A673 (cell line): ENCODE measurements at regions of chr15 and their contacts with region 1.

Region 1: GRCh38 chr15:51227940-51228783 is 110.2 kb downstream of the CYP19A1 start:
- DNase-seq: peak; percentile 84
- H3K4me3 ChIP-seq: no peak overlapping the region
- H3K27ac ChIP-seq: no peak overlapping the region
- H3K4me1 ChIP-seq: peaks cover 10% of the 10 kb centered on the region
- H3K27me3 ChIP-seq: no peaks in the 10 kb centered on the region
- CTCF ChIP-seq: no peak

Region 2: DNA sequence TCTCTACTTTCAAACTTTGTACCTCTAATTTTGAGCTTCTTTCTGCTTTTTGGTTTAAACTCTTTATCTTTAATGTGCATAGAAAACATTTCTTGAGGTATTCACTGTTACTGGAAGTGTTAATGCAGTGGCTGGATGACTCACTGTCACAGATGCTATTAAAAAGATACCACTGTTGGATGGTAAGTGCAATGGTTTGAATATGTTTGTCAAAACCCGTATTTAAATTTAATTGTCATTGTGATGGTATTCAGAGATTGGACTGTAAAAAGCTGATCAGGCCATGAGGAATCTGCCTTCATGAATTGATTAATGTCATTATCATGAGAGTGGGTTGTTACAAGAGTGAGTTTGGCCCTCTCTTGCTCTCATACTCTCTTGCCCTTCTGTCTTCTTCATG is 249.1 kb before region 1 on chr15:
- CTCF ChIA-PET with region 1: no interaction called
- POLR2A ChIA-PET with region 1: no interaction called
- intact Hi-C with region 1: no loop called
- DNase-seq: peak; percentile 2
- H3K4me3 ChIP-seq: no peak overlapping the region
- H3K27ac ChIP-seq: no peak overlapping the region
- H3K4me1 ChIP-seq: no peaks in the 10 kb centered on the region
- H3K27me3 ChIP-seq: no peaks in the 10 kb centered on the region
- CTCF ChIP-seq: no peak

Region 3: DNA sequence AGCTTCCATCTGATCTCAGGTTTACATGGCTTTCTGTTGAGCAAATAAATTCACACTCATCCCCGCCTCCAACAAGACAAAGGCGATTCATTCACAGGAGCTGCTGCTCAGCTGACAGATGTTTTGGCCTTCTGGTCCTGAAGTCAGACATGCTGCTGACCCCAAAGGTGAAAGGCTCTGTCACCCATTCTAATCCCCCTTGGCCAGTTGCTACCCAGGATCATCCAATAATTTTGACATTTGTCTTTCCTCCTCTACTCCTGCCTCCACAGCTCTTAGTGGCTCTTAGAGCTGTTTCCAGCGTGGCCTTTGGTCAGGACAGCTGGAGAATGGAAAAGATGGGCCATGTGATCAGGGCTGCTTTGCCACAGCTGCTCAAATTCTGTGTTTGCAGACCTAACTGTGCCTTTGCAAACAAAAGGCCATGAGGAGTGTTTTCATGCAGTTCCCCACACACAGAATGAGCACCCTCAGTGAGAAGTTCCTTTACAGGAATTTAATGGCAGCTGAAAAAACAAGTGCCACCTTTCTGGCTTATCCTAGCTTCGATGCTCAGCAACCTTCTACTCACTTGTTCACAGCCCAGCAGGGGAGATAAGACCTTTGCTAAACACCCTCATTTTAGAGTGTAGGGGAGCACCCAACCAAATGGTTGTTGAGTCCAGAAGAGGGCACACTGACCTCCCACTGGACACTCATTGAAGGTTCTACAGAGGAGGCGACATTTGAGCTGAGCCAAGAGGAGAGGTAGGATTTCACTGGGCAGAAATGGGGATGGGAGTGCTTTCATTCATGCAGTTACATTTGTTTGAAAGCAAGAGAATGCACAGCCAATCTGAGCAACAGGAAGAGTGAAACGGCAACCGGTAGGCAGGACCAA is 71.3 kb after region 1 on chr15:
- CTCF ChIA-PET with region 1: no interaction called
- POLR2A ChIA-PET with region 1: no interaction called
- intact Hi-C with region 1: no loop called
- DNase-seq: no peak
- H3K4me3 ChIP-seq: no peak overlapping the region
- H3K27ac ChIP-seq: no peak overlapping the region
- H3K4me1 ChIP-seq: no peaks in the 10 kb centered on the region
- H3K27me3 ChIP-seq: no peaks in the 10 kb centered on the region
- CTCF ChIP-seq: no peak

Region 4: GRCh38 chr15:51375726-51376640 is 147.8 kb after region 1 on chr15:
- CTCF ChIA-PET with region 1: interaction called, 12 read pairs
- POLR2A ChIA-PET with region 1: no interaction called
- intact Hi-C with region 1: loop called (anchors 5 kb)
- DNase-seq: no peak
- H3K4me3 ChIP-seq: no peak overlapping the region
- H3K27ac ChIP-seq: no peak overlapping the region
- H3K4me1 ChIP-seq: no peaks in the 10 kb centered on the region
- H3K27me3 ChIP-seq: no peaks in the 10 kb centered on the region
- CTCF ChIP-seq: no peak

Region 5: DNA sequence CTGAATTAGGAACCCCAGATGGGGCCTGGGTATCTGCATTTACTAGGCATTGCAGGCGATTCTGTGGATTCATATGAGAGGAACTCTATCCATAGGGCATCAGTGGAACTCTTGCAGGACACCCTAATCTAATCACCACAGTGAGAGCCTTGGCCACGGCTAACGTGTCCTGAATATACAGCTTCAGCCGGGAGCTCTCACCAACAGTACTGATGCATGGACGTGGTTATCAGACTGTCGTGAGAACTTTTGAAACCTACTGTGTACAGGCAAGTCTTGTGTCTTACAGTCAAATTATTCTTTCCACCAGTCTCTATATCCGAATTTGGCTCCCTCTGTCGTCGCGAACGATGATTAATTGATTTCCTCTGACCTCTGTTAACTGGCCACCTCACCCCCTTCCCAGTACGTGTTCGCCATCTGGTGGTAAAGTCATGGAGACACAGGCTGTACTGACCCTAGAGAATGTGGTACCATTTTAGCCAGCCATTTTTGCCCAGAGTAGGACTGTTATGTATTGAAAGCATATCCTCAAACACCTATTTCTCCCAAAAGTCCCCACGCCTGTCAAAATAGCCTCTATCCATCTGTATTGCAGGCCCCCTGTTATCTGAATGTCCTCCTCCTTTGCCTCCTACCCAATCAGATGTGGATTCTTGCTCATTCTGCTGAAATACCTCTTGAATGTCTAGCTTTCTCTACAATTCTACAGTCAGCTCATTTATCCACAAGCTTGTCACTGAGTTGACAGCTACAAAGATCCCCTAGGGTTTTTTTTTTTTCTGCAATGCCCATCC is 153.0 kb after region 1 on chr15:
- CTCF ChIA-PET with region 1: interaction called, 12 read pairs
- POLR2A ChIA-PET with region 1: no interaction called
- intact Hi-C with region 1: loop called (anchors 5 kb)
- DNase-seq: peak; percentile 62
- H3K4me3 ChIP-seq: no peak overlapping the region
- H3K27ac ChIP-seq: no peak overlapping the region
- H3K4me1 ChIP-seq: no peaks in the 10 kb centered on the region
- H3K27me3 ChIP-seq: no peaks in the 10 kb centered on the region
- CTCF ChIP-seq: peak; percentile 77